H1 (cell line): ENCODE measurements at regions of chr1 and their contacts with region 1.

Region 1: DNA sequence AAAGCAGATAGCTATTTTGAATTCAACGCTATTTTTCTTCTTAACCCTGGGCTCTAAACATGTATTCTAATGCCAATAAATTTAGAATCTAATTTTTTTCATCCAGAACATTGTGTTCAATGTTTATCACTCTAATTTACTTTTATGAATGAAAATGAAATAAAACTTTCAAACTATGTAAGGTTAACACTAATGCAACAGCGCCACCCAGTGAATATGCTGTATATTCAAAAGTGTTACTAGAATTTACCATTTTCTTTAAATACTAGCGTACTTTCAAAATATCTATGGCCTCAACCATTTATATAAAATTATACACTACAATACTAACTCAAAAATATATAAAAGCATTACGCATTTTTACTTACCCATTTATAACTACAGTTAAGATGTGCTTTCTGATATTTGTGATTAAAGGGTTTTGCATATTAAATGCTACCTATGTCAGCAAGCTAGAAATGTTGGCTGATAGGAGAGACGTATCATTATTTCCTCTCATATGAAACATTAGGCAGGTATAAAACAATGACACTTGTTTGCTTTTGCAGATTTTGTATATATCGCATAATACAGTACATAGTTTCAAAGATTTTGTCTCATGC is 5.9 kb upstream of the NUF2 start:
- DNase-seq: no peak
- H3K4me3 ChIP-seq: no peak overlapping the region
- H3K27ac ChIP-seq: no peak overlapping the region
- H3K4me1 ChIP-seq: peaks cover 0 to 1% (median 0%) of the 10 kb centered on the region in 4 experiments; a peak in 1 of 7 replicates
- H3K27me3 ChIP-seq: no peaks in the 10 kb centered on the region
- CTCF ChIP-seq: peak in 2 of 3 experiments; percentile 29 to 49; a peak in 2 of 4 replicates
- EP300 ChIP-seq: no peak
- POLR2A ChIP-seq: no peak
- RAD21 ChIP-seq: peak in 1 of 2 experiments; percentile 75

Region 2: GRCh38 chr1:162847839-162848453 is 467.9 kb before region 1 on chr1:
- CTCF ChIA-PET with region 1: interaction called, 38 read pairs
- POLR2A ChIA-PET with region 1: interaction called, 3 read pairs
- DNase-seq: peak in 1 of 2 experiments; percentile 91
- H3K4me3 ChIP-seq: no peak overlapping the region
- H3K27ac ChIP-seq: no peak overlapping the region
- H3K4me1 ChIP-seq: no peaks in the 10 kb centered on the region
- H3K27me3 ChIP-seq: no peaks in the 10 kb centered on the region
- CTCF ChIP-seq: peak; percentile 62 to 80 (median 72)
- EP300 ChIP-seq: no peak
- POLR2A ChIP-seq: no peak
- RAD21 ChIP-seq: peak; percentile 82 to 86

Region 3: DNA sequence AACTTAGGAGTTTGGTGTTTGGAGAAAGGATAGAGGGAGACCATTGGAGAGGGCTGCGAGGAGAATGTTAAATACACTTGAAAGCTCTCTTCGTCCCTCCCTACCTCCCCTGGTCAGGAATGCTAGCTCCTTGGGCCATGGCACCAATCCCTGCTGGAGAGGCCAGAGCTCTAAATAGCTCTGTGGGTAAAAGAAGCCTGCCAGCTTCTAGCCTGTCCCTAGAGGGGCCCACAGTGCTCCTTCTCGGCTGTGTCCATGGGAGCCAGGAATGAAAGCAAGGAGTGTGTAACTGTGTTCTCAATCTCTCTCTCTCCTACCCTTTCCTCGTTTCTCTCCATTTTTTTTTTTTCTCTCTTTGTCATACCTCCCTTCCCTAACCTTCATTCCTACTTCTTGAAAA is 454.8 kb before region 1 on chr1 and contains the start of gene CCDC190:
- CTCF ChIA-PET with region 1: interaction called, 19 read pairs
- POLR2A ChIA-PET with region 1: no interaction called
- DNase-seq: no peak
- H3K4me3 ChIP-seq: no peak within 1 kb of the TSS
- H3K27ac ChIP-seq: no peak within 1 kb of the TSS
- H3K4me1 ChIP-seq: no peaks in the 10 kb centered on the region
- H3K27me3 ChIP-seq: no peaks in the 10 kb centered on the region
- CTCF ChIP-seq: no peak
- EP300 ChIP-seq: no peak
- POLR2A ChIP-seq: no peak
- RAD21 ChIP-seq: no peak
- total RNA-seq, gene CCDC190: not detected in 2 replicates

Region 4: GRCh38 chr1:162886705-162887104 is 429.2 kb before region 1 on chr1:
- CTCF ChIA-PET with region 1: interaction called, 20 read pairs
- POLR2A ChIA-PET with region 1: no interaction called
- DNase-seq: no peak
- H3K4me3 ChIP-seq: no peak overlapping the region
- H3K27ac ChIP-seq: no peak overlapping the region
- H3K4me1 ChIP-seq: peaks cover 0 to 4% (median 2%) of the 10 kb centered on the region in 4 experiments; a peak in 1 of 7 replicates
- H3K27me3 ChIP-seq: no peaks in the 10 kb centered on the region
- CTCF ChIP-seq: no peak
- EP300 ChIP-seq: no peak
- POLR2A ChIP-seq: no peak
- RAD21 ChIP-seq: no peak

Region 5: DNA sequence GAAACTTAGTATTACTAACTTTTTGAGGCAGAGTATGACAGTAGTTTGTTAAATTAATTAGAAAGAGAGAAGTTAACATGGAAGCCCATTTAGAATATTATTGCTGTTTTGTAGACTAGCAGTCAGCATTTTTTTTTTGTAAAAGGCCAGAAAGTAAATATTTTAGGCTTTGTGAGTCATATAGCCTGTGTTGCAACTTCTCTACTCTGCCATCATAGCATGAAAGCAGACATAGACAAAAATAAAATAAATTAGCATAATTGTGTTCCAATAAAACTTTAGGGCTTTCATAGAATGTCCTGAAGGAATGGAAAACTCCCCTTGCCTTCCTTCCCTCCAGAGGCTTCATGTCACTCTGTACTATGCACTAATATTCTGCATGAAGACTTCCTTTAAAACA is 259.0 kb before region 1 on chr1:
- CTCF ChIA-PET with region 1: interaction called, 11 read pairs
- POLR2A ChIA-PET with region 1: no interaction called
- DNase-seq: no peak
- H3K4me3 ChIP-seq: no peak overlapping the region
- H3K27ac ChIP-seq: no peak overlapping the region
- H3K4me1 ChIP-seq: no peaks in the 10 kb centered on the region
- H3K27me3 ChIP-seq: no peaks in the 10 kb centered on the region
- CTCF ChIP-seq: no peak
- EP300 ChIP-seq: no peak
- POLR2A ChIP-seq: no peak
- RAD21 ChIP-seq: no peak

Region 6: DNA sequence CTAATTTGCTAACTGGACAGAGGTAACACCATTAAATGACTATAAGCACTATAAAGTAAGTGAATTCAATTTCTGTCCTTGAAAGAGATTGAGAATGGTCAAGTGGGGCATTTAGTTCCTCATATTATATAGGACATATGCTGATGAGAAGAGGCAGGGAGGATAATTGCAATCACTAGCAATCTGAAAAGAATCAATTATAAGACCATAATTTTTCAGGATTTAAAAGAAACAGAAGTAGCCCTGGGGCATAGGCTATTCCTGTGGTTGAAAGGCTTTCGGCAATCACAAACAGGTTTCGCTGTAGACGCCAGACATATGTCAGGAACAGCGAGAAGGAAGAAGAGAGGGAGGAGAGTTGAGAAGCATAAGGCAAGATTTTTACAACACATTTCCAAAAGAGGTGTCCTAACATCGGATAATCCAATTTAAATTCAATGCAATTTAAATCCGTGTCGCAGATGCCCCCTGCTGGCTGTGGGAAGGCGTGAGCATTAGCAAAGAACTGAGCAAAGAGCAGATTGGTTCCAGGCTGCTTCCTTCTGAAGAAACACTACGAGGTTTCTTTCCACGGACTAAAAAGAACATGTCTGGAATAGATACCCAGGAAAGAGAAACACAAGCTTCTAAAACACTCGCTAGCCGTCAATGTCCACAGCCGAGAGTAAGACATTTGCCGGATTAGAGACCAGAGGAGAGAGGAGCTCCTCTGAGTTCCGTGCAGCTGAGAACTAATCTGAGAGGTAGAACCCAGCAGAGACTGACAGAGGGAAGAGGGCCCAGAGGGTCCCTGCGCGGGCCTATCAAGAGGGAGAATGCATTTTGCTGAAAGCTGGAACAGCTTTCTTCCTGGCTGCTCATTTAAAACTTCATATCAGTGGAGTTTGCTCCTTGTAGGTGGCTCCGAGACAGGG is 141.1 kb before region 1 on chr1:
- CTCF ChIA-PET with region 1: interaction called, 30 read pairs
- POLR2A ChIA-PET with region 1: no interaction called
- DNase-seq: peak; percentile 19 to 77
- H3K4me3 ChIP-seq: no peak overlapping the region
- H3K27ac ChIP-seq: no peak overlapping the region
- H3K4me1 ChIP-seq: no peaks in the 10 kb centered on the region; a peak in 1 of 7 replicates
- H3K27me3 ChIP-seq: no peaks in the 10 kb centered on the region
- CTCF ChIP-seq: peak; percentile 64 to 78 (median 72)
- EP300 ChIP-seq: no peak
- POLR2A ChIP-seq: no peak
- RAD21 ChIP-seq: peak; percentile 74 to 76